AG04449 (cell line): ENCODE measurements at regions of chr1 and their contacts with region 1.

Region 1: GRCh38 chr1:23743287-23744052 is at the start of gene ELOA:
- DNase-seq: no peak
- H3K4me3 ChIP-seq: peak within 1 kb of the TSS; percentile 80
- CTCF ChIP-seq: no peak

Region 2: GRCh38 chr1:23673086-23673813 is 70.2 kb before region 1 on chr1:
- CTCF ChIA-PET with region 1: no interaction called
- POLR2A ChIA-PET with region 1: no interaction called
- DNase-seq: no peak
- H3K4me3 ChIP-seq: no peak overlapping the region
- CTCF ChIP-seq: no peak

Region 3: DNA sequence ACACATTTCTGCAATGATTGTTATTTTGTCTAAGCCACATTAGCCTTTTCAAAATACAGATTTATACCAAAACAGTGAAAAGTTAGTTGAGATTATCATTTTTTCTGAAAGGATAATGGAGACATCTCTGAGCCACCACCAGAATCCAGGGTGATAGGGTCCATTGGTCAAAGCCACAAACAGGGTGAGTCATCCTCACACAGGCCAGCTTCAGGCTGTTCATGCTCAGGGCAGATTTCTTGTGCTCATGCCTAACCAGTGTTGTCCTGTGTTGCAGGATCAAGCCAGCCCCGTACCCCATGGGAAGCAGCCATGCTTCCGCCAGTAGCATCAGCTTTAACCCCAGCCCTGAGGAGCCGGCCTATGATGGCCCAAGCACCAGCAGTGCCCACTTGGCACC is 13.2 kb after region 1 on chr1:
- CTCF ChIA-PET with region 1: interaction called, 23 read pairs
- POLR2A ChIA-PET with region 1: interaction called, 3 read pairs
- DNase-seq: no peak
- H3K4me3 ChIP-seq: no peak overlapping the region
- CTCF ChIP-seq: no peak